ENCODE measurements at regions of chr13 and their contacts with region 1.

Region 1: GRCh38 chr13:78595495-78596398 is 7.6 kb downstream of the POU4F1 start:
- DNase-seq: no peak
- ATAC-seq: no peak
- H3K4me3 ChIP-seq: no peak overlapping the region
- H3K4me3 Mint-ChIP-seq: no peak overlapping the region
- H3K27ac ChIP-seq: no peak overlapping the region
- H3K27ac Mint-ChIP-seq: no peak overlapping the region
- H3K4me1 ChIP-seq: peaks cover 12% of the 10 kb centered on the region
- H3K4me1 Mint-ChIP-seq: peaks cover 11% of the 10 kb centered on the region
- H3K27me3 ChIP-seq: peaks cover 69 to 80% of the 10 kb centered on the region in 2 experiments
- H3K27me3 Mint-ChIP-seq: peaks cover 79% of the 10 kb centered on the region
- CTCF ChIP-seq: no peak

Region 2: GRCh38 chr13:78609464-78610205 is 13.9 kb after region 1 on chr13:
- CTCF ChIA-PET with region 1: interaction called, 3 read pairs
- POLR2A ChIA-PET with region 1: no interaction called
- intact Hi-C with region 1: loop called (anchors 2 kb)
- DNase-seq: no peak
- ATAC-seq: no peak
- H3K4me3 ChIP-seq: peak overlapping the region in 1 of 2 experiments; percentile 21
- H3K4me3 Mint-ChIP-seq: peak overlapping the region; percentile 74
- H3K27ac ChIP-seq: no peak overlapping the region
- H3K27ac Mint-ChIP-seq: no peak overlapping the region
- H3K4me1 ChIP-seq: peaks cover 26% of the 10 kb centered on the region
- H3K4me1 Mint-ChIP-seq: peaks cover 31% of the 10 kb centered on the region
- H3K27me3 ChIP-seq: peaks cover 38 to 47% of the 10 kb centered on the region in 2 experiments
- H3K27me3 Mint-ChIP-seq: peaks cover 53% of the 10 kb centered on the region
- CTCF ChIP-seq: no peak

Measured in CD8-positive, alpha-beta T cell (primary cell).